ENCODE measurements at regions of chr10 and their contacts with region 1.

Region 1: GRCh38 chr10:93566435-93567276 is at the start of gene FFAR4:
- DNase-seq: no peak
- ATAC-seq: no peak
- H3K4me3 Mint-ChIP-seq: no peak within 1 kb of the TSS
- H3K27ac Mint-ChIP-seq: no peak within 1 kb of the TSS
- H3K4me1 Mint-ChIP-seq: no peaks in the 10 kb centered on the region
- H3K27me3 Mint-ChIP-seq: peaks cover 50% of the 10 kb centered on the region
- CTCF ChIP-seq: no peak
- total RNA-seq, gene FFAR4: not detected

Region 2: DNA sequence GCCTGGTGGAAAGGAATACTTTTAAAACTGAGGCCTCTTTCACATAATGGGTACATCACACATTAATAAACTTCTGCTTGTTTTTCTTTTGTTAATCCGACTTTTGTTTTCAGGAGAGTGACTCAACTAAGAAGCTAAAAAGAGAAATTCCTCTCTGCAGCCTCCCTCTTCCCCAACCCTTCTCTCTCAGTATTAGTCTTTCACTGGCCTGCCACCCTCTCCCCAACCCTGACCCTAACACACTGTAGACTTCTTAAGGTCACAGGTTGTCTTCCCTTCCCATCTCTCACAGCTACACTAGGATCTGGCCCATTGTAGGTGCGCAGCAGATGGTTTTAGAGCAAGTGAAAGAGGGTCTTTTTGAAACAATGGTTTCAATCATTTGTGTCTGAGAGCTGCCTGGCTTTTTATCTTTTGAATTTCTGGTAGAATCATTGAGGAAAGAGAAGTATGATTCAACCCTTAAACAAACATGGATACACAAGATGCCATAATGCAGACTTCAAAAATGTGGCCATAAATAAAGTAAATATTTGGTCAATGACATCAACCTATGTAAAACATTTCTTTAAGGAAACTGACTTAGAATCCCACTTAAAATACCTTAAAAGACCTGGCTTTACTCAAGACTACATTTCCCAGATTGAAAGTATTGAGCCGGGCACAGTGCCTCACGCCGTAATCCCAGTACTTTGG is 18.1 kb before region 1 on chr10:
- CTCF ChIA-PET with region 1: no interaction called
- POLR2A ChIA-PET with region 1: no interaction called
- intact Hi-C with region 1: no loop called
- DNase-seq: no peak
- ATAC-seq: no peak
- H3K4me3 Mint-ChIP-seq: no peak overlapping the region
- H3K27ac Mint-ChIP-seq: no peak overlapping the region
- H3K4me1 Mint-ChIP-seq: no peaks in the 10 kb centered on the region
- H3K27me3 Mint-ChIP-seq: no peaks in the 10 kb centered on the region
- CTCF ChIP-seq: no peak

Region 3: GRCh38 chr10:93672022-93672678 is 105.5 kb after region 1 on chr10:
- CTCF ChIA-PET with region 1: no interaction called
- POLR2A ChIA-PET with region 1: no interaction called
- intact Hi-C with region 1: loop called (anchors 10 kb)
- DNase-seq: no peak
- ATAC-seq: no peak
- H3K4me3 Mint-ChIP-seq: no peak overlapping the region
- H3K27ac Mint-ChIP-seq: no peak overlapping the region
- H3K4me1 Mint-ChIP-seq: no peaks in the 10 kb centered on the region
- H3K27me3 Mint-ChIP-seq: no peaks in the 10 kb centered on the region
- CTCF ChIP-seq: no peak

Region 4: GRCh38 chr10:93718937-93719725 is 152.5 kb after region 1 on chr10:
- CTCF ChIA-PET with region 1: no interaction called
- POLR2A ChIA-PET with region 1: no interaction called
- intact Hi-C with region 1: no loop called
- DNase-seq: no peak
- ATAC-seq: no peak
- H3K4me3 Mint-ChIP-seq: no peak overlapping the region
- H3K27ac Mint-ChIP-seq: no peak overlapping the region
- H3K4me1 Mint-ChIP-seq: no peaks in the 10 kb centered on the region
- H3K27me3 Mint-ChIP-seq: peaks cover 19% of the 10 kb centered on the region
- CTCF ChIP-seq: no peak

Measured in activated CD8-positive, alpha-beta T cell treated with anti-CD3 and anti-CD28 coated beads for 36 hours (primary cell).